ENCODE measurements at regions of chr2 and their contacts with region 1.

Region 1: GRCh38 chr2:119943058-119943457 is 69.8 kb upstream of the EPB41L5 start:
- DNase-seq: no peak
- ATAC-seq: no peak
- H3K4me3 ChIP-seq: no peak overlapping the region
- H3K4me3 Mint-ChIP-seq: no peak overlapping the region
- H3K27ac ChIP-seq: peak overlapping the region in 1 of 2 experiments; percentile 38
- H3K27ac Mint-ChIP-seq: peak overlapping the region; percentile 46
- H3K4me1 ChIP-seq: peaks cover 25% of the 10 kb centered on the region
- H3K4me1 Mint-ChIP-seq: peaks cover 63% of the 10 kb centered on the region
- H3K27me3 ChIP-seq: no peaks in the 10 kb centered on the region
- H3K27me3 Mint-ChIP-seq: no peaks in the 10 kb centered on the region
- CTCF ChIP-seq: no peak

Region 2: GRCh38 chr2:119476301-119477021 is 466.6 kb before region 1 on chr2:
- CTCF ChIA-PET with region 1: no interaction called
- POLR2A ChIA-PET with region 1: no interaction called
- intact Hi-C with region 1: no loop called
- DNase-seq: peak in 7 of 9 experiments; percentile 8 to 60 (median 22)
- ATAC-seq: no peak
- H3K4me3 ChIP-seq: no peak overlapping the region
- H3K4me3 Mint-ChIP-seq: no peak overlapping the region
- H3K27ac ChIP-seq: no peak overlapping the region
- H3K27ac Mint-ChIP-seq: no peak overlapping the region
- H3K4me1 ChIP-seq: no peaks in the 10 kb centered on the region
- H3K4me1 Mint-ChIP-seq: no peaks in the 10 kb centered on the region
- H3K27me3 ChIP-seq: peaks cover 0 to 5% of the 10 kb centered on the region in 2 experiments
- H3K27me3 Mint-ChIP-seq: peaks cover 13% of the 10 kb centered on the region
- CTCF ChIP-seq: peak; percentile 74

Region 3: GRCh38 chr2:119849838-119850539 is 93.1 kb before region 1 on chr2:
- CTCF ChIA-PET with region 1: no interaction called
- POLR2A ChIA-PET with region 1: no interaction called
- intact Hi-C with region 1: no loop called
- DNase-seq: no peak
- ATAC-seq: no peak
- H3K4me3 ChIP-seq: no peak overlapping the region
- H3K4me3 Mint-ChIP-seq: no peak overlapping the region
- H3K27ac ChIP-seq: no peak overlapping the region
- H3K27ac Mint-ChIP-seq: no peak overlapping the region
- H3K4me1 ChIP-seq: no peaks in the 10 kb centered on the region
- H3K4me1 Mint-ChIP-seq: peaks cover 47% of the 10 kb centered on the region
- H3K27me3 ChIP-seq: no peaks in the 10 kb centered on the region
- H3K27me3 Mint-ChIP-seq: no peaks in the 10 kb centered on the region
- CTCF ChIP-seq: no peak

Region 4: DNA sequence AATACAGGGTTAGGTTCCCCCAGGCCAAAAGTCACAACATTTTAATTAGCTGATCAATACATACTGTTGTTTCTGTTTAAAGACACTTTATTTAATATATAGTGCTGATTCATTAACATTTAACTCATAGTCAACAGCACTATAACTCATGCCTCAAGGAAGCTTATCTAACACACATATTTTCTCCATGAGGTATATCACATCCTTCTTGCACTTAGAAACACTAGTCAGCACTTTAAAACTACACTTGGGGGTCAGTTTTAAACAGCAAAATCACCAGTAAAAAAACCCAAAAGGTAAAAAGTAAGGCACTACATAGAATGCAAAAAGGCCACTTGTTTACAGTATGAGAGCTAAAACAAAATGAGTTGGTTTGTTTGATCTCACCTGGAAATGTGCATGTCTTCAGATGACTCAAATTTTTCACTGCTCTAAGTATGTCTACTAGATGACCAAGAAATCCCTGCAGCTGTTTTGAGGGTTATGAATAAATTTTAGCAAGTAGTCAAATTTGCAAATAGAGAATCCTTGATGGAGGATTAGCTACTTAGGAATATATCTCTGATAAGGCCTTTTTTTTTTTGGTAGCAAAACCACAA is 15.7 kb after region 1 on chr2:
- CTCF ChIA-PET with region 1: no interaction called
- POLR2A ChIA-PET with region 1: no interaction called
- intact Hi-C with region 1: loop called in 1 of 2 experiments (anchors 2 kb)
- DNase-seq: no peak
- ATAC-seq: no peak
- H3K4me3 ChIP-seq: no peak overlapping the region
- H3K4me3 Mint-ChIP-seq: no peak overlapping the region
- H3K27ac ChIP-seq: peak overlapping the region in 1 of 2 experiments; percentile 6
- H3K27ac Mint-ChIP-seq: peak overlapping the region; percentile 70
- H3K4me1 ChIP-seq: no peaks in the 10 kb centered on the region
- H3K4me1 Mint-ChIP-seq: peaks cover 15% of the 10 kb centered on the region
- H3K27me3 ChIP-seq: no peaks in the 10 kb centered on the region
- H3K27me3 Mint-ChIP-seq: no peaks in the 10 kb centered on the region
- CTCF ChIP-seq: no peak

Region 5: DNA sequence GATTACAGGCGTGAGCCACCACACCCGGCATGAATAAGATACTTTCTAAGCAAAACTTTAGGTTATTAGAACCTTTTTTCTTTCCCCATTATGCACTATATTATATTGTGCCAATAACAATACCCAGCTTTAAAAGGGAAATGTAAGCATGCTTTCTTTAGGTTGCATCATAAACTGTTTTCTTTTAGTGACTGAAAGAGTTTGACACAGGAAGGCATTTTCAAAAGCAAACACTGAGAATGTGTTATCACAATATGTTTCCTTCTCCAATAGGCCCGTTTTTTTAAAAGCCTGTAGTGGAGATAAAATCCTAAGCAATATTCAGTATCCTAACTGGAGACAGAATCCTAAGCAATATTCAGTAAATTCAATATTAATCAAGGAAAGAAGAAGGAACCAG is 53.1 kb after region 1 on chr2:
- CTCF ChIA-PET with region 1: no interaction called
- POLR2A ChIA-PET with region 1: no interaction called
- intact Hi-C with region 1: no loop called
- DNase-seq: no peak
- ATAC-seq: no peak
- H3K4me3 ChIP-seq: no peak overlapping the region
- H3K4me3 Mint-ChIP-seq: no peak overlapping the region
- H3K27ac ChIP-seq: no peak overlapping the region
- H3K27ac Mint-ChIP-seq: no peak overlapping the region
- H3K4me1 ChIP-seq: no peaks in the 10 kb centered on the region
- H3K4me1 Mint-ChIP-seq: no peaks in the 10 kb centered on the region
- H3K27me3 ChIP-seq: no peaks in the 10 kb centered on the region
- H3K27me3 Mint-ChIP-seq: peaks cover 4% of the 10 kb centered on the region
- CTCF ChIP-seq: no peak

Region 6: GRCh38 chr2:120053891-120054290 is 110.8 kb after region 1 on chr2:
- CTCF ChIA-PET with region 1: no interaction called
- POLR2A ChIA-PET with region 1: no interaction called
- intact Hi-C with region 1: no loop called
- DNase-seq: no peak
- ATAC-seq: no peak
- H3K4me3 ChIP-seq: no peak overlapping the region
- H3K4me3 Mint-ChIP-seq: no peak overlapping the region
- H3K27ac ChIP-seq: no peak overlapping the region
- H3K27ac Mint-ChIP-seq: no peak overlapping the region
- H3K4me1 ChIP-seq: no peaks in the 10 kb centered on the region
- H3K4me1 Mint-ChIP-seq: no peaks in the 10 kb centered on the region
- H3K27me3 ChIP-seq: no peaks in the 10 kb centered on the region
- H3K27me3 Mint-ChIP-seq: no peaks in the 10 kb centered on the region
- CTCF ChIP-seq: no peak

Region 7: GRCh38 chr2:120109186-120110061 is 166.4 kb after region 1 on chr2:
- CTCF ChIA-PET with region 1: no interaction called
- POLR2A ChIA-PET with region 1: no interaction called
- intact Hi-C with region 1: loop called in 1 of 2 experiments (anchors 10 kb)
- DNase-seq: peak in 2 of 9 experiments; percentile 37 to 68
- ATAC-seq: peak; percentile 73
- H3K4me3 ChIP-seq: peak overlapping the region in 1 of 2 experiments; percentile 12
- H3K4me3 Mint-ChIP-seq: peak overlapping the region; percentile 72
- H3K27ac ChIP-seq: peak overlapping the region; percentile 1 to 33
- H3K27ac Mint-ChIP-seq: peak overlapping the region; percentile 81
- H3K4me1 ChIP-seq: peaks cover 21% of the 10 kb centered on the region
- H3K4me1 Mint-ChIP-seq: peaks cover 30% of the 10 kb centered on the region
- H3K27me3 ChIP-seq: no peaks in the 10 kb centered on the region
- H3K27me3 Mint-ChIP-seq: no peaks in the 10 kb centered on the region
- CTCF ChIP-seq: peak; percentile 66

Measured in CD8-positive, alpha-beta T cell (primary cell).